Transverse colon (tissue), 4 donors: ENCODE measurements at regions of chr1 and their contacts with region 1.

Region 1: GRCh38 chr1:215517441-215517891 is 49.6 kb upstream of the KCTD3 start:
- DNase-seq: no peak
- H3K4me3 ChIP-seq: no peak overlapping the region
- H3K27ac ChIP-seq: no peak overlapping the region
- H3K4me1 ChIP-seq: no peaks in the 10 kb centered on the region
- H3K27me3 ChIP-seq: no peaks in the 10 kb centered on the region
- CTCF ChIP-seq: no peak
- EP300 ChIP-seq: no peak
- POLR2A ChIP-seq: no peak

Region 2: DNA sequence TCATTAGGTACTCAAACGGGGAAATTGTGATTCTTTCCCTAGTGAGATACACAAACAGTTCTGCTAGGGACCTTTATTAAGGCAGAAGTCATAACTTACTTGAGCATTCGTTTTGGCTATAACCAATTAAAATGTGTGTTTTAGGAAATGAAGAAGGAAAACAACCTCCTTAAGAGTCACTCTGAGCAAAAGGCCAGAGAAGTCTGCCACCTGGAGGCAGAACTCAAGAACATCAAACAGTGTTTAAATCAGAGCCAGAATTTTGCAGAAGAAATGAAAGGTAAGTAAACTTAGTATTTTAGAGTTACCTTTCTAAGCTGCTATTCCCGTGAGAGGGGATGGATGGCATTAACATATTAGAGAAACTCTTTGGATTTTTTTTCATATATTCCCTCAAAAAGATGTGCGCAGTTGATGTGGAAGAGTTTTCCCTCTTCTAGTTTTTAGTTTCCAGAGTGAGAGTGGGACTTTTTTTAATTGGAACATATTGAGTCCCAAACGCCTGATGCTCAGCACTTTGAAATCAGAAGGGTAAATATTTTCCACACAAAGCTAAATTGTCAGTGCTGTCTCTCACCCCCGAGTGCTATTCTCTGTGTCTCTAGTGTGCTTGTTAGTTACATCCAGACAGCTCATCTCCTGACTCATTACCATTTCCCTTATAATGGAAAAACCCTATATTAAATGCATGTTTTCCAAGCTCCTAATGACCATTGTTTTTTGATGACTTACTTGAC is 879.6 kb before region 1 on chr1:
- in situ Hi-C with region 1: loop called in 2 of 4 experiments (anchors 10 to 25 kb)
- intact Hi-C with region 1: no loop called
- DNase-seq: peak; percentile 9
- H3K4me3 ChIP-seq: no peak overlapping the region
- H3K27ac ChIP-seq: no peak overlapping the region
- H3K4me1 ChIP-seq: no peaks in the 10 kb centered on the region
- H3K27me3 ChIP-seq: no peaks in the 10 kb centered on the region
- CTCF ChIP-seq: peak; percentile 32 to 66 (median 57)
- EP300 ChIP-seq: no peak
- POLR2A ChIP-seq: no peak

Region 3: GRCh38 chr1:214660862-214661261 is 856.6 kb before region 1 on chr1:
- in situ Hi-C with region 1: loop called in 1 of 4 experiments (anchors 25 kb)
- intact Hi-C with region 1: no loop called
- DNase-seq: peak; percentile 9
- H3K4me3 ChIP-seq: no peak overlapping the region
- H3K27ac ChIP-seq: no peak overlapping the region
- H3K4me1 ChIP-seq: no peaks in the 10 kb centered on the region
- H3K27me3 ChIP-seq: no peaks in the 10 kb centered on the region
- CTCF ChIP-seq: peak in 2 of 5 experiments; percentile 9 to 13
- EP300 ChIP-seq: no peak
- POLR2A ChIP-seq: no peak